ENCODE measurements at regions of chr3 and their contacts with region 1.

Region 1: GRCh38 chr3:125003369-125003853 is 52.4 kb downstream of the HEG1 start:
- ATAC-seq: peak; percentile 59 to 85 (median 71)
- H3K4me3 ChIP-seq: no peak overlapping the region
- H3K27ac ChIP-seq: no peak overlapping the region
- H3K4me1 ChIP-seq: peaks cover 27 to 30% of the 10 kb centered on the region in 2 donors

Region 2: DNA sequence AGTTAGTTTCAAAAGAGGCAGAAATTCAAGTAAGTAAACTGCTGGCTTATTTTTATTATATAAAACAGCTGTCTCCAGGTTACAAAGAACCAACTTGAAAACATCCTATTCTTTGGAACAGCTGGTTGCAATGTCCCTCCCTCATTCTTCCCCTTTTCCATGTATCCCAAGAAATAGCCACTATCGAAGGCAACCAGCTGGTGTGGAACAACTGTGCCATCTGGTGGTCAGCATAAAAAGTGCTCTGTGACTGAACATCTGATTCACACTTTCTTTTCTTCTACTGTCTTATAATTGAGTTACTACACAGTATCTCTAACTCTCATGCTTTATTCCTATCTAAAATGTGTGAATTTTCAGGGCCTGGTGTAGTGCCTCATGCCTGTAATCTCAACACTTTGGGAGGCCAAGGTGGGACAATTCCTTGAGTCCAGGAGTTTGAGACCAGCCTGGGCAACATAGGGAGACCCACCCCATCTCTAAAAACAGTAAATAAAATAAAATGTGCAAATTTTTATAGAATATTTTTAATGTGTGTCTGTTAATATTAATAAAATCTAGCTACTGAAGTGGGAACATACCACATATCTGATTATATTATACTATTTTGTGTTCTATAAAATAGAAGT is 582.3 kb after region 1 on chr3:
- in situ Hi-C with region 1: loop called in 1 of 9 experiments (anchors 25 kb)
- ATAC-seq: peak; percentile 38 to 81 (median 61)
- H3K4me3 ChIP-seq: no peak overlapping the region
- H3K27ac ChIP-seq: no peak overlapping the region
- H3K4me1 ChIP-seq: peaks cover 0 to 3% of the 10 kb centered on the region in 2 donors

Measured in motor neuron (in vitro differentiated cells).